ENCODE measurements at regions of chr6 and their contacts with region 1.

Region 1: DNA sequence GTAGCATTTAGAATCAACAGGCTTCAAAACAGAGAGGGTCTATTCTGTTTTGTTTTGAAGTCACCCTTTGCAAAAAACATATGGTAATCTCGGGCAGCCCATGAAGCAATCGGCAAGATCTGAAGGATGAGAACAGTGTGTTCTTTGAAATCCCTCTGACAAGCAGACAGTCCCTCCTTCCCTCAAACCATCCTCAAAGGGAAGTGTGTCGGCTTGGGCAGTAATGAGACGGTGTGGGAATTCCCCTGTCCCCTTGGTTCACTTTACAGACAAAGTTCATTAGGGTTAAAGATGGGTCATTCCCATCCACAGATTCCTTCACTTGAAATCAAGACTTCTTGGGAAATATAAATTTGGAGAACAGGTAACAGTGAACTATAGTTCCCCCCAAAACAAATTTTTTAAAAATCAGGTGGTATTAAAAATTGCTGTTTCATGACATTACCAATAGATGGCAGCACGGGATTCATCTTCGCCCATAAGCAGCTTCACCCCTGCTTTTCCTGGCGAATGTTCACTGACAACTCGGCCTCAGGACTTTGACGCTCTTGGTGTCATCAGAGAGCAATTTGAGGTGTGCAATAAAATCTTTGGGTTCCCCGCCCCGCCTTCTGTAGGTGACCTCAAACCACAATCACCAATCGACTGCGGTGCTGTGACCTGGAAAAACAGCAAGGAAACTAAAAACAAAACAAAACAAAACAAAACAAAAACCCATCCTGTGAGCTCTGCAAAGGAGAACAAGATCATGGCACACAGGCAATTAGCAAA is 159.3 kb upstream of the TNFAIP3 start:
- DNase-seq: peak; percentile 92
- H3K4me3 ChIP-seq: no peak overlapping the region
- H3K27ac ChIP-seq: peak overlapping the region; percentile 64
- H3K4me1 ChIP-seq: peaks cover 7% of the 10 kb centered on the region
- H3K27me3 ChIP-seq: no peaks in the 10 kb centered on the region
- CTCF ChIP-seq: peak; percentile 65 to 75

Region 2: DNA sequence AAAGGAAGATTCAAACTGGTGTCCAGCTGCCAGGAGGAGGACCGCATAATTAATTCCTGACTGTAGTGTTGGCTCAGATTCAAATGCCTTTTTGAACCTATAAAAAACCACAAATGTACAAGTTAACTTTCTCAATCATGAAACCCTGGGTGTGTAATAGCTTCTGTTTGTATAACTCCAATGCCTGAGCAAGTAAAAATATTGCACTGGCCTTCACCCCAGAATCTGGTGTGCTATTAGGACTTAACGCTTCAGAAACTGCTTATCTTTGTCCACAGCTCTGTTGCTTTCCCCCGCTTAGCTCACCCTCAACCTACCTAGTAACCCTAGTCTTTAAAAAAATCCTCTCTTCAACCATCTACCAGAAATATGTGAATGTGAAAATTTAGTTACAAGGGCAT is 1038.5 kb before region 1 on chr6:
- CTCF ChIA-PET with region 1: no interaction called
- dilution Hi-C with region 1: no loop called
- in situ Hi-C with region 1: no loop called
- intact Hi-C with region 1: no loop called
- DNase-seq: peak; percentile 89
- H3K4me3 ChIP-seq: no peak overlapping the region
- H3K27ac ChIP-seq: no peak overlapping the region
- H3K4me1 ChIP-seq: peaks cover 17% of the 10 kb centered on the region
- H3K27me3 ChIP-seq: no peaks in the 10 kb centered on the region
- CTCF ChIP-seq: no peak

Region 3: GRCh38 chr6:137845455-137845854 is 137.7 kb after region 1 on chr6:
- CTCF ChIA-PET with region 1: no interaction called
- dilution Hi-C with region 1: no loop called
- in situ Hi-C with region 1: no loop called
- intact Hi-C with region 1: loop called (anchors 2 kb)
- DNase-seq: no peak
- H3K4me3 ChIP-seq: no peak overlapping the region
- H3K27ac ChIP-seq: no peak overlapping the region
- H3K4me1 ChIP-seq: peaks cover 5% of the 10 kb centered on the region
- H3K27me3 ChIP-seq: no peaks in the 10 kb centered on the region
- CTCF ChIP-seq: peak in 1 of 2 donors; percentile 45

Region 4: GRCh38 chr6:137975188-137975940 is 267.6 kb after region 1 on chr6:
- CTCF ChIA-PET with region 1: no interaction called
- dilution Hi-C with region 1: no loop called
- in situ Hi-C with region 1: no loop called
- intact Hi-C with region 1: loop called (anchors 1 kb)
- DNase-seq: no peak
- H3K4me3 ChIP-seq: no peak overlapping the region
- H3K27ac ChIP-seq: no peak overlapping the region
- H3K4me1 ChIP-seq: peaks cover 4% of the 10 kb centered on the region
- H3K27me3 ChIP-seq: no peaks in the 10 kb centered on the region
- CTCF ChIP-seq: peak; percentile 31 to 43

Measured in mammary epithelial cell (primary cell).